K562 (cell line): ENCODE measurements at regions of chr22 and their contacts with region 1.

Region 1: DNA sequence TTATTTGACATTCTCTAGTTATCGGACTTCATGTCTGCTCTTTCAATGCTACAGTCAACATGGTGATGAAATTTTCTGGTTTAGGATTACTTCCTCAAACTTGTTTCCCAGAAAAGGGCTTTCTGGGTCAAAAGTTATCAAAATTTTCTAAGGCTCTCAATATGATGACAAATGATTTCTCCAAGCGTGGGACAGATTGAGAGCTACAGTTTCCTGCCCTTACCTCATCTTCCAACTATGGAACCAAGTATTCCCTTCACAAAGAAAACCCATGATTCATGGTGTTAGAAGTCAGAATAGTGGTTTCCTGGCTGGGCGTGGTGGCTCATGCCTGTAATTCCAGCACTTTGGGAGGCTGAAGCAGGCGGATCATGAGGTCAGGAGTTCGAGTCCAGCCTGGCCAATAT is 17.8 kb downstream of the MYO18B start:
- DNase-seq: peak in 2 of 4 experiments; percentile 30 to 69
- ATAC-seq: peak; percentile 63
- H3K4me3 ChIP-seq: no peak overlapping the region
- H3K27ac ChIP-seq: 0 out of 3 replicates have a peak overlapping the region, but pooled peaks have one; percentile 4
- H3K4me1 ChIP-seq: peaks cover 22% of the 10 kb centered on the region in 2 experiments; a peak in 4 of 5 replicates
- H3K27me3 ChIP-seq: no peaks in the 10 kb centered on the region
- CTCF ChIP-seq: no peak
- EP300 ChIP-seq: peak; percentile 83
- POLR2A ChIP-seq: no peak
- RAD21 ChIP-seq: no peak

Region 2: DNA sequence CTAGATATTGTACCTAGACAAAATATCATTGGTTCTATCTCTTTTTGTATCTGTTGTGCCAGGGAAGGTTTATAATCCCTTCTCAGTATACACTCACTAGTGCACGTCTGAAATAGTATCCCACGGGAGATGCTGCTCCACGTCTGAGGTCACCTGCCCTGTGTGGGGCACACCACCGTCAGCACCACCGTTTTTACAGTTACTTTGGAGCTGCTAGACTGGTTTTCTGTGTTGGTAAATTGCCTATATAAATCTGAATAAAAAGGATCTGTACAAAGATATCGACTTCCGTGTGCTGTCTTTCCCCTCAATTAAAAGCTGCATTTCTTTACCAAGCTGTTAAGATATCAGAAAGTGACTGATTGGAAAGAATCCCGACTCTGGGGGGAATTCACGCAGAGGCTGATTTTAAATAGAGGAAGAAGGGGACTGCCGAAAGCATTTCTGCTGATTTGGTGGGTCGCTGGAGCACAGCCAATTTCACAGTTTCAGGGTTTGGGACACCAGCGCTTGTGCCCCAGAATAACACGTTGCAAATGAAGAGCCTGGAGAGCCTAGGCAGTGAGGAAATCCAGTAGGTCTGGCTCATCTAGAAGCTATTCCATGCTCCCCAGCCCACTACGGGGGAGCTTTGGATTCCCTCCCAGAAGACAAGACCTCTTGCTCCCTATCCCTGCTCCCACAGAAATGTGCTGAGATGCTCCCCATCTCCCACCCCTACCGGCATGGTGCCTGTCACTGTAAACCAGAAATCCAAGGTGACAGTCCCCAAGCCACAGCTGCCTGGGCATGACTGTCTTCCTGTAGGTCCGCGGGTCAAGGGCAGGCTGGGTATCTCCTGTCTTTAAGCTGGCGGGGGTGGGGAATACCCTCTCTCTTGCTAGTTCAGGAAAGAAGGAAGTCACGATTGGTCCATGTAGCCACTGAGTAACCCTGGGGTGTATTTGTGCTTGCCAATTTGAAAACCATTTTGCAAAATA is 30.5 kb before region 1 on chr22:
- CTCF ChIA-PET with region 1: no interaction called
- POLR2A ChIA-PET with region 1: no interaction called
- in situ Hi-C with region 1: no loop called
- intact Hi-C with region 1: loop called (anchors 5 kb)
- DNase-seq: no peak
- ATAC-seq: no peak
- H3K4me3 ChIP-seq: no peak overlapping the region
- H3K27ac ChIP-seq: no peak overlapping the region
- H3K4me1 ChIP-seq: peaks cover 3 to 17% of the 10 kb centered on the region in 2 experiments; a peak in 4 of 5 replicates
- H3K27me3 ChIP-seq: no peaks in the 10 kb centered on the region
- CTCF ChIP-seq: no peak
- EP300 ChIP-seq: no peak
- POLR2A ChIP-seq: no peak
- RAD21 ChIP-seq: no peak

Region 3: DNA sequence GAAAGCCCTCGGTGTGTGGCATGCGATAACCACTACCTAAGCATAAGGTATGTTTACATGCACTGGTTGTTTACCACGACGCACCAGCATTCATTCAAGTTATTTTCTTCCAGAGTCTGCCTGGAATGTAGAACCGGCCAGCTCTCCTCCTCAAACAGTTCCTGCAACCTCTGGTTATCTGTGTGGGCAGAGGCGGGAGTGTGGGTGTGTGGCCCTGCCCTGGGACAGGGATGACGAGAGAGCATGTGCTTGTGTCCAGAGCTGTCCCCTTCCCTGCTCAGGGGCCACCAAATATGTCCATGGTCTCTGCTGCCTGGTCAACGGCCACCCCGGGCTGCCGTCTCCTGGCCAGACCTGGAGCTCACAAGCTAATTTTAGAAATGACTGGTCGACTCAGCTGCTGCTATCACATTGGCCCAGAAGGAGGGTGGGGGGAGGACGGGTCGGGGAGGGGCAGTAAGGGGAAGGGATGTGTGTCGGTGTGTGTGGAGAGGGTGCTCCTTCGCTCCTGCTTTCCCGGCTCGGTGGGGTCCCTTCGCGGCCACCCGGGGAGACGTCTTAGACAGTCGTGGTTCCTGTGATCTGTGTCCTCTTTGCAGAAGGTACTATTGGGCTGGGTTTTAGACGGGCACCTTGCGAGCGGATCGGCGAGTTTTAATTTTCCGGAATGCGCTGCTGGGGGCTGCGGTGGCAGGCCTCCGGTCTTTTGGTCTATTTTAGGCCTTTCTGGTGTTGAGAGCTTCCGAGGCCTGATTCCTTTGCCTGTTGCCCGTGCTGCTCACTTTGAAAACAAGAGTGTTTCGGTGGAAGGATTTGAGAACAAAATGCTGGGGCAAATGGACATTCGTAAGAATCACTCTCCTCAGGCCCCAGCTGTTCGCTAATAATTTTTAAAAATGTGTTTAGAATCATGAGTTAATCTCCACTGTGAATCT is 17.9 kb before region 1 on chr22 and contains the start of gene MYO18B:
- CTCF ChIA-PET with region 1: no interaction called
- POLR2A ChIA-PET with region 1: interaction called, 51 read pairs
- in situ Hi-C with region 1: no loop called
- intact Hi-C with region 1: loop called (anchors 2 kb)
- DNase-seq: peak; percentile 85 to 90 (median 89)
- ATAC-seq: peak; percentile 91
- H3K4me3 ChIP-seq: peak within 1 kb of the TSS; percentile 78
- H3K27ac ChIP-seq: peak within 1 kb of the TSS; percentile 99
- H3K4me1 ChIP-seq: peaks cover 12 to 34% of the 10 kb centered on the region in 2 experiments; a peak in 4 of 5 replicates
- H3K27me3 ChIP-seq: no peaks in the 10 kb centered on the region
- CTCF ChIP-seq: peak; percentile 30 to 34 (median 33); a peak in 3 of 6 replicates
- EP300 ChIP-seq: peak; percentile 69
- POLR2A ChIP-seq: peak; percentile 74
- RAD21 ChIP-seq: peak in 1 of 2 experiments; percentile 39; a peak in 2 of 4 replicates
- polyA plus RNA-seq, gene MYO18B: 0.06 to 0.18 TPM

Region 4: GRCh38 chr22:25747245-25747944 is 12.4 kb before region 1 on chr22:
- CTCF ChIA-PET with region 1: no interaction called
- POLR2A ChIA-PET with region 1: interaction called, 51 read pairs
- in situ Hi-C with region 1: no loop called
- intact Hi-C with region 1: loop called (anchors 2 kb)
- DNase-seq: peak; percentile 71 to 79 (median 76)
- ATAC-seq: peak; percentile 78
- H3K4me3 ChIP-seq: no peak overlapping the region
- H3K27ac ChIP-seq: no peak overlapping the region; the same call in 2 of the 3 replicates
- H3K4me1 ChIP-seq: peaks cover 17 to 61% of the 10 kb centered on the region in 2 experiments
- H3K27me3 ChIP-seq: no peaks in the 10 kb centered on the region
- CTCF ChIP-seq: no peak
- EP300 ChIP-seq: no peak
- POLR2A ChIP-seq: no peak
- RAD21 ChIP-seq: no peak

Region 5: DNA sequence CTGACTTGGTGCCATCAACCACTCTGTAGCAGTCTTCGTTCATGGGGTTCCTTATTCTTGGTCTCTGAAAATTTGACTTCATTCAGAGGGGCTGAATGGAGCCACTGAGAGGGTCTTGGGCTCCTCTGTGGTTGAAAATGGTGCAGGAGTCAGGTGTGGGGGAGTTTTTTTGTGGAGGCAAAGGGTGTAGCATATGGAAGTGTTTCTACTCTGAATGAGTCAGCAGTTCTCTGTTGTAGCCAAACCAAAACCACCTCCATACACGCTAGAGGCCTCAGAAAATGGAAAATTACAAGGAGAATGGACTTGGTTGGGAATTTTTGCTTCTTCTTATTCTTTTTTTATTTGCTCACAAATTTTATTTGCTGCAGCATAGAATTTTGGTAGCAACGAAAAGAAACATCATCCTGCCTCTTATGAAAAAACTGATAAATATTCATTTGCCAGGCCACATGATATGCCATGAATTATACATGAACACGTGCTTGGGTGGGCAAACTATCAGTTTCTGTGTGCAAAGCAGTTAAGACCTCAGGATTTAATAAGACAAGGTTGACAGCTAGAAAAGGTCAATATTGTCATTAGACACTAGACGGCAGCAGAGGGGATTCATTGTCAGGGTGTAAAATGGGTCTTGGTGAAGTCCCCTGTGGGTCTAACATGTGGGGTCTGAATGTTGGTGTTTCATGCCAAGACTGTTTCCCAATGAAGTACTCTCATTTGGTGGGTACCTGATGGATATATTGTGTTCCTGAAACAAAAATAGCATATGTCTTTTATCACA is 93.9 kb after region 1 on chr22:
- CTCF ChIA-PET with region 1: no interaction called
- POLR2A ChIA-PET with region 1: no interaction called
- in situ Hi-C with region 1: no loop called
- intact Hi-C with region 1: no loop called
- DNase-seq: peak; percentile 37 to 57 (median 40)
- ATAC-seq: peak; percentile 87
- H3K4me3 ChIP-seq: no peak overlapping the region
- H3K27ac ChIP-seq: peak overlapping the region; percentile 35; the same call in 2 of the 3 replicates
- H3K4me1 ChIP-seq: peaks cover 0 to 11% of the 10 kb centered on the region in 2 experiments; a peak in 3 of 5 replicates
- H3K27me3 ChIP-seq: no peaks in the 10 kb centered on the region
- CTCF ChIP-seq: peak in 2 of 3 experiments; percentile 3 to 36; a peak in 2 of 6 replicates
- EP300 ChIP-seq: no peak
- POLR2A ChIP-seq: no peak
- RAD21 ChIP-seq: no peak